CD14-positive monocyte (primary cell): ENCODE measurements at regions of chr1 and their contacts with region 1.

Region 1: GRCh38 chr1:8873506-8874229 is 4.8 kb downstream of the ENO1 start:
- DNase-seq: peak; percentile 95 to 99 (median 98)
- H3K4me3 ChIP-seq: peak overlapping the region in 1 of 3 experiments; percentile 45
- H3K4me3 Mint-ChIP-seq: peak overlapping the region; percentile 61 to 85
- H3K27ac ChIP-seq: peak overlapping the region; percentile 77 to 99
- H3K27ac Mint-ChIP-seq: peak overlapping the region; percentile 93 to 99 (median 97)
- H3K4me1 ChIP-seq: peaks cover 73 to 86% of the 10 kb centered on the region in 2 donors
- H3K4me1 Mint-ChIP-seq: peaks cover 68% of the 10 kb centered on the region
- H3K27me3 ChIP-seq: no peaks in the 10 kb centered on the region
- H3K27me3 Mint-ChIP-seq: peaks cover 0 to 1% (median 0%) of the 10 kb centered on the region in 3 donors
- CTCF ChIP-seq: no peak

Region 2: DNA sequence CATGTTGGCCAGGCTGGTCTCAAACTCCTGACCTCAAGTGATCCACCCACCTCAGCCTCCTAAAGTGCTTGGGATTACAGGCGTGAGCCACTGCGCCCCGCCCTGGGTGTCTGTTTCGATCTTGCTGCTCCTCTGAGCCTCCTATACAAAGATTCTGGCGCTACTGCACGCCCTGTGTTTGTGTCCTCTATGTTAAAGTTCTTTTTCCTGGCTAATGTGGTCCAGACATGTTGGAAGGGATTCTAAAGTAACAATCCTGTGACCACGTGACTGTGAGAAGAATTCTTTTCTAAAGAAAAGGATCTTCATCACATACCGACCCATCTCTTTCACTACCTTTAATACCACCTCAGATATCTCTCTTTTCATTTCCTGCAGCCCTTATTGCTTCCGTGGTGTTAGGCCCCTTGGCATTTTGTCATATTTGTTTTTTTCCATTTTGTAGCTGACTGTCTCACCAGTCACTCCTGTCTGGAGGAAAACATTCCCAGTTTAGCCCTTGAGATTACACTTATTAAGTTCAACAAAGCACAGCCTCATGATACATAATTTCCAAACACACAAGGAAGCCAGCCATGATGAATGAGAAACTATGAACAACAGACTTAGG is 32.0 kb after region 1 on chr1:
- intact Hi-C with region 1: loop called in 1 of 2 experiments (anchors 5 kb)
- DNase-seq: no peak
- H3K4me3 ChIP-seq: no peak overlapping the region
- H3K4me3 Mint-ChIP-seq: no peak overlapping the region
- H3K27ac ChIP-seq: no peak overlapping the region
- H3K27ac Mint-ChIP-seq: no peak overlapping the region
- H3K4me1 ChIP-seq: peaks cover 6 to 17% of the 10 kb centered on the region in 2 donors
- H3K4me1 Mint-ChIP-seq: peaks cover 24% of the 10 kb centered on the region
- H3K27me3 ChIP-seq: no peaks in the 10 kb centered on the region
- H3K27me3 Mint-ChIP-seq: peaks cover 0 to 6% (median 2%) of the 10 kb centered on the region in 3 donors
- CTCF ChIP-seq: no peak

Region 3: GRCh38 chr1:9078015-9078750 is 204.5 kb after region 1 on chr1:
- intact Hi-C with region 1: loop called in 1 of 2 experiments (anchors 5 kb)
- DNase-seq: peak; percentile 38 to 74 (median 47)
- H3K4me3 ChIP-seq: peak overlapping the region in 1 of 3 experiments; percentile 19
- H3K4me3 Mint-ChIP-seq: no peak overlapping the region
- H3K27ac ChIP-seq: peak overlapping the region in 1 of 2 donors; percentile 29
- H3K27ac Mint-ChIP-seq: peak overlapping the region; percentile 25 to 80 (median 70)
- H3K4me1 ChIP-seq: peaks cover 61 to 77% of the 10 kb centered on the region in 2 donors
- H3K4me1 Mint-ChIP-seq: peaks cover 73% of the 10 kb centered on the region
- H3K27me3 ChIP-seq: no peaks in the 10 kb centered on the region
- H3K27me3 Mint-ChIP-seq: peaks cover 1 to 5% (median 3%) of the 10 kb centered on the region in 3 donors
- CTCF ChIP-seq: no peak